Naive thymus-derived CD4-positive, alpha-beta T cell (primary cell): ENCODE measurements at regions of chr19 and their contacts with region 1.

Region 1: GRCh38 chr19:58002384-58003173 is at the start of gene ZNF606:
- DNase-seq: peak; percentile 79 to 87 (median 85)
- ATAC-seq: peak; percentile 100
- H3K4me3 ChIP-seq: peak within 1 kb of the TSS; percentile 91
- H3K4me3 Mint-ChIP-seq: peak within 1 kb of the TSS; percentile 80 to 90 (median 88)
- H3K27ac ChIP-seq: peak within 1 kb of the TSS; percentile 90
- H3K27ac Mint-ChIP-seq: peak within 1 kb of the TSS; percentile 79 to 94 (median 88)
- H3K4me1 ChIP-seq: peaks cover 14 to 18% of the 10 kb centered on the region in 2 donors
- H3K4me1 Mint-ChIP-seq: peaks cover 15 to 40% (median 27%) of the 10 kb centered on the region in 7 donors
- H3K27me3 ChIP-seq: no peaks in the 10 kb centered on the region
- H3K27me3 Mint-ChIP-seq: no peaks in the 10 kb centered on the region
- total RNA-seq, gene ZNF606: 11.9 to 37.5 (median 15.3) TPM

Region 2: GRCh38 chr19:57320180-57321084 is 682.1 kb before region 1 on chr19 and contains the start of gene ZNF543:
- CTCF ChIA-PET with region 1: no interaction called
- POLR2A ChIA-PET with region 1: no interaction called
- intact Hi-C with region 1: loop called in 1 of 2 experiments (anchors 1 kb)
- DNase-seq: peak; percentile 78 to 90 (median 84)
- ATAC-seq: peak; percentile 98
- H3K4me3 ChIP-seq: peak within 1 kb of the TSS; percentile 76
- H3K4me3 Mint-ChIP-seq: peak within 1 kb of the TSS; percentile 87 to 98 (median 94)
- H3K27ac ChIP-seq: peak within 1 kb of the TSS; percentile 83
- H3K27ac Mint-ChIP-seq: peak within 1 kb of the TSS; percentile 82 to 98 (median 96)
- H3K4me1 ChIP-seq: peaks cover 0 to 18% of the 10 kb centered on the region in 2 donors
- H3K4me1 Mint-ChIP-seq: peaks cover 14 to 30% (median 25%) of the 10 kb centered on the region in 7 donors
- H3K27me3 ChIP-seq: peaks cover 0 to 6% of the 10 kb centered on the region in 2 donors
- H3K27me3 Mint-ChIP-seq: peaks cover 20 to 31% (median 24%) of the 10 kb centered on the region in 5 donors
- total RNA-seq, gene ZNF543: 3.6 to 9.0 (median 8.0) TPM

Region 3: DNA sequence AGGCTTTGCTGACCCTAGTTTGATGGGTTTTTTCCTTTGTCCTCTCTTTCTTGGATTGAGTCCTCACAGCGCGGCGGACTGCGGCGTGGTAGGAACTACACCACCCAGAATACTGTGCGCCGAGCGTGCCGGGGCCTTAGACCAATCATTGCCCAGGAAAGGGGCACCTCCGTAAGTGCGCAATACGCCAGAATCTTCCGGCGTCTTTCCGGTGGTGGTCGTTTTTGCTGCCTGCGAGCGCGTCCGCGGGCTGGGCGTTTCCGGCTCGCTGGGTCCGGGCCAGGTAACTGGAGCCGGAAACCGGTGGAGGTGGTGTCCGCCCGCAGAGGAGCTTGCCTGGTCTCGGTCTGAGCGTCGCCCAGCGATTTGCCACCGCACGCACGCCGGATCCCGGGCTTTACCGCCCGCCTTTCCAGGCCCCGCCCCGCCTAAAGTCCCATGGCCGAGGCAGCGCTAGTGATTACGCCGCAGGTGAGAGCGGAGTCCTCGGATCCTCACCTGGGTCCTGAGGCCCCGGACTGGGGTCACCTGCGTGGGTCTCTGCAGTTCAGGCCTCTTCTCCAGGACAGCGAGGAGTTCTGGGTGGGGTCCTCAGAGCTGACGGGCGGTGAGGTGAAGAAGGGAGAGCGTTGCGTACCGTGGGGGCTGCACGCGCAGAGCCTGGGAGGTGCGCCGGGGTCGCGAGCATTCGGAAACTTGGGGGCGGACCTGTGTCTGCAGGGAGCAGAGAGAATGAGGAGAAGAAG is 475.3 kb before region 1 on chr19 and contains the start of gene ZNF549:
- CTCF ChIA-PET with region 1: no interaction called
- POLR2A ChIA-PET with region 1: no interaction called
- intact Hi-C with region 1: loop called in 1 of 2 experiments (anchors 1 kb)
- DNase-seq: peak; percentile 65 to 90 (median 88)
- ATAC-seq: peak; percentile 99
- H3K4me3 ChIP-seq: peak within 1 kb of the TSS; percentile 98
- H3K4me3 Mint-ChIP-seq: peak within 1 kb of the TSS; percentile 89 to 98 (median 96)
- H3K27ac ChIP-seq: peak within 1 kb of the TSS; percentile 94
- H3K27ac Mint-ChIP-seq: peak within 1 kb of the TSS; percentile 80 to 98 (median 95)
- H3K4me1 ChIP-seq: peaks cover 14 to 18% of the 10 kb centered on the region in 2 donors
- H3K4me1 Mint-ChIP-seq: peaks cover 15 to 36% (median 32%) of the 10 kb centered on the region in 7 donors
- H3K27me3 ChIP-seq: no peaks in the 10 kb centered on the region
- H3K27me3 Mint-ChIP-seq: peaks cover 0 to 4% (median 0%) of the 10 kb centered on the region in 5 donors
- total RNA-seq, gene ZNF549: 6.9 to 24.8 (median 11.3) TPM

Region 4: DNA sequence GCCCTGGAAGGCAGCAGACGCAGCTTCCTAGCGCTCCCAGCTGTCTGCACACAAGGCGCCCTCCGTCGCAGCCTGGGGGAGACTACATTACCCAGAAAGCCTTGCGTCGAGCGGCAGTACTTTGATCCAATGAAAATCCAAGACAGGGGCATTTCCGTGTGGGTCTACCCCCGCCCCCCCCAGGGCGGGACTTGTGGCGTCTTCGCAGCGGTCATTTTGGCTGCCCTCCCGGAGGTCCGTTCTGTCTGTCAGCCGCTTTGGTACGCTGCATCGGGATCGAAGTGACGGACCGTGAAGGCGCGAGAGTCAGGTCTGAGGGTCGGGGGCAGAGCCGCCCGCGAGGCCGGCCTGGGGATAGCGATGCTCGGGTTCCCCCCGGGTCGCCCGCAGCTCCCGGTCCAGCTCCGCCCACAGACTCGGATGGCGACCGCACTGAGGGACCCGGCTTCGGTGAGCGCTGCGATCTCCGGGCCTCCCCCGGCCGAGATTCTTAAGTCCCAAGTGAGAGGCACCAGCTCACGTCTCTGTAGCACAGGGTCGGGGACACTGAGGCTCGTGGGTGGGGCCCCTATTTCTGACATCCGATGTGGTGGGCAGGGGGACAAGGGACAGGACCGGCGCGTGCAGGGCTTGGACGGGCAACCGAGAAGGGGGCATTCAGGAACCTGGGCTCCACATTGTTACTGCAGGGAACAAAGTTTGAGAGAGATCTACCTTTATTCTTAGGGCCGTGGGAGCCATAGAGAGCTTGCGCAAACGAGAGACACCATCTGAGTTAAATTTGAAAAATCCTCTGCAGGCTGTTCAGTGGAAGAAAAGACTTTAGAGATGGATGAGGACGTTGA is 369.4 kb before region 1 on chr19 and contains the start of gene ZNF211:
- CTCF ChIA-PET with region 1: no interaction called
- POLR2A ChIA-PET with region 1: interaction called, 3 read pairs
- intact Hi-C with region 1: loop called in 1 of 2 experiments (anchors 5 kb)
- DNase-seq: peak; percentile 74 to 89 (median 86)
- ATAC-seq: peak; percentile 100
- H3K4me3 ChIP-seq: peak within 1 kb of the TSS; percentile 87
- H3K4me3 Mint-ChIP-seq: peak within 1 kb of the TSS; percentile 87 to 97 (median 94)
- H3K27ac ChIP-seq: peak within 1 kb of the TSS; percentile 90
- H3K27ac Mint-ChIP-seq: peak within 1 kb of the TSS; percentile 81 to 97 (median 89)
- H3K4me1 ChIP-seq: peaks cover 3 to 13% of the 10 kb centered on the region in 2 donors
- H3K4me1 Mint-ChIP-seq: peaks cover 21 to 36% (median 28%) of the 10 kb centered on the region in 7 donors
- H3K27me3 ChIP-seq: no peaks in the 10 kb centered on the region
- H3K27me3 Mint-ChIP-seq: no peaks in the 10 kb centered on the region
- total RNA-seq, gene ZNF211: 18.0 to 56.7 (median 33.7) TPM

Region 5: DNA sequence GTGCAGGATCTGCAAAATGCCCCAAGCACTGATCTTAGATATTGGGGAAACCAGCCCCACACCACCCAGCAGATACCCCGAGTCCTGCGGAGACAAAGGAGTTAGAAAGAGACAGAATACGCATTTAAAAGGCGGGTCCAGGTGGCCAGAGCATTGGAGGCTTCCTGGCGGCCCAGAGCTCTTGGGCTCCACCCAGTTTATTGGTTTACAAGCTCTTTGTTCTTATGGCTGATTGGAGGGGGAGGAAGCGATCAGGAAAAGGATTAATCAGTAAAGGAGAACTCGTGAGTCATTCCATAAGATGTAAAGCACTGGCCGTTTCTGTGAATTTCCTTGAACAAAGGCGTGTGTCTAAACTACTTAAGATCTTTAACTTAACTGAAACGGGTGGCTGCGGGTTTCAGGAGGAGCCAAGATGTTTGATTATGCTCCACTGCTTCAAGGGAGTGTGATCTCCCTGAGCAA is 152.0 kb before region 1 on chr19:
- CTCF ChIA-PET with region 1: no interaction called
- POLR2A ChIA-PET with region 1: interaction called, 3 read pairs
- intact Hi-C with region 1: loop called (anchors 1 kb)
- DNase-seq: no peak
- ATAC-seq: no peak
- H3K4me3 ChIP-seq: peak overlapping the region; percentile 72
- H3K4me3 Mint-ChIP-seq: peak overlapping the region; percentile 93 to 97 (median 94)
- H3K27ac ChIP-seq: peak overlapping the region; percentile 92
- H3K27ac Mint-ChIP-seq: peak overlapping the region; percentile 90 to 98 (median 95)
- H3K4me1 ChIP-seq: peaks cover 7 to 11% of the 10 kb centered on the region in 2 donors
- H3K4me1 Mint-ChIP-seq: peaks cover 22 to 32% (median 28%) of the 10 kb centered on the region in 7 donors
- H3K27me3 ChIP-seq: no peaks in the 10 kb centered on the region
- H3K27me3 Mint-ChIP-seq: no peaks in the 10 kb centered on the region

Region 6: GRCh38 chr19:57947208-57948134 is 55.1 kb before region 1 on chr19 and contains the start of gene ZNF256:
- CTCF ChIA-PET with region 1: no interaction called
- POLR2A ChIA-PET with region 1: no interaction called
- intact Hi-C with region 1: loop called (anchors 1 kb)
- DNase-seq: peak; percentile 55 to 85 (median 77)
- ATAC-seq: peak; percentile 97
- H3K4me3 ChIP-seq: peak within 1 kb of the TSS; percentile 71
- H3K4me3 Mint-ChIP-seq: peak within 1 kb of the TSS; percentile 89 to 97 (median 95)
- H3K27ac ChIP-seq: peak within 1 kb of the TSS; percentile 80
- H3K27ac Mint-ChIP-seq: peak within 1 kb of the TSS; percentile 83 to 97 (median 92)
- H3K4me1 ChIP-seq: peaks cover 6 to 9% of the 10 kb centered on the region in 2 donors
- H3K4me1 Mint-ChIP-seq: peaks cover 10 to 28% (median 21%) of the 10 kb centered on the region in 7 donors
- H3K27me3 ChIP-seq: no peaks in the 10 kb centered on the region
- H3K27me3 Mint-ChIP-seq: peaks cover 0 to 4% (median 0%) of the 10 kb centered on the region in 5 donors
- total RNA-seq, gene ZNF256: 5.2 to 13.8 (median 11.8) TPM

Region 7: DNA sequence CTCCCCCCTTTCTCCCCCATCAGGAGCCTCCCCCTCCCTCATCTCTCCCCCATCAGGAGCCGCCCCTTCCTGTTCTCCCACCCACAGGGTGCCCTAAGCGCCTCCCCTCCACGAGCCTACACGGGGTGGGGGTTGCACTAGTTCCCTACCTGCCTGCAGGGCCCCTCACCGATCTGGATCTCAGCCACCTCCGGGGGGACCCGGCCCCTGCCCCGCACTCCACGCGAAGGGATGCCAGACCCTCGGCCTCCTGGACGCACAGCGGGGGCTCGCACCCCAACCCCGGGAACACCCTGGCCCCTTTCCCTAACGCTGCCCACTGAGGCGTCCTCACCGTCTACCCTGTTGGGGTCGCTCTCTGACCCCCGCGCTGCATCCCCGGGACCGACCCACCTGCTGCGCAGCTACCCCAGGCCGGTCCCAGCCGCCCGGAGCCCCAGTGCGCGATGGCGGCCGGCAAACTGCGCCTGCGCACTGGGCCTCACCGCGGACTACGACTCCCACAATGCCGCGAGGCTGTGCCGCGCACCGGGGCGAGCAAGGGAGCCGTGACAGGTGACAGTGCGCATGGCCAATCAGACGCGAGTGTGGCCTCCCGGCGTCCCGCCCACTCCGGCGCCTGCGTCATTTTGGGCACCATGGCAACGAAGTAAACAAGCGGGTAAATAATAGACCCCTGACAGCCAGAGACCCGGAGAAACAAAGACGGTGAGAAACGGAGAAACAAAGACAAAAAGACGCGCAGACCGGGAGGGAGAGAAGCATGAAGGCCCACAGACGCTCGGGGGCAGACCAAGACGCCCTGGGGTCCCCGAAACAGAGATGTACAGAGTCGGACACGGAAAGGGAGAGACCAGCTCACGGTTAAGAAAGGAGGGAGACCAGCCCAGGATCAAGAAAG is 95.5 kb after region 1 on chr19 and contains the start of gene ZSCAN18:
- CTCF ChIA-PET with region 1: no interaction called
- POLR2A ChIA-PET with region 1: interaction called, 3 read pairs
- intact Hi-C with region 1: loop called in 1 of 2 experiments (anchors 1 kb)
- DNase-seq: peak; percentile 77 to 100 (median 99)
- ATAC-seq: peak; percentile 97
- H3K4me3 ChIP-seq: peak within 1 kb of the TSS; percentile 86
- H3K4me3 Mint-ChIP-seq: peak within 1 kb of the TSS; percentile 83 to 100 (median 91)
- H3K27ac ChIP-seq: peak within 1 kb of the TSS; percentile 100
- H3K27ac Mint-ChIP-seq: peak within 1 kb of the TSS; percentile 98 to 100 (median 100)
- H3K4me1 ChIP-seq: peaks cover 0 to 11% of the 10 kb centered on the region in 2 donors
- H3K4me1 Mint-ChIP-seq: peaks cover 8 to 18% (median 15%) of the 10 kb centered on the region in 7 donors
- H3K27me3 ChIP-seq: no peaks in the 10 kb centered on the region
- H3K27me3 Mint-ChIP-seq: no peaks in the 10 kb centered on the region
- total RNA-seq, gene ZSCAN18: 8.2 to 100 (median 78.1) TPM